Endothelial cell of umbilical vein (primary cell): ENCODE measurements at regions of chr5 and their contacts with region 1.

Region 1: GRCh38 chr5:160082614-160083500 is 36.4 kb downstream of the PWWP2A start:
- DNase-seq: peak; percentile 79
- H3K4me3 ChIP-seq: peak overlapping the region in 1 of 3 experiments; percentile 41
- H3K27ac ChIP-seq: peak overlapping the region; percentile 63
- H3K4me1 ChIP-seq: peaks cover 23% of the 10 kb centered on the region
- H3K27me3 ChIP-seq: no peaks in the 10 kb centered on the region
- CTCF ChIP-seq: no peak
- POLR2A ChIP-seq: no peak

Region 2: DNA sequence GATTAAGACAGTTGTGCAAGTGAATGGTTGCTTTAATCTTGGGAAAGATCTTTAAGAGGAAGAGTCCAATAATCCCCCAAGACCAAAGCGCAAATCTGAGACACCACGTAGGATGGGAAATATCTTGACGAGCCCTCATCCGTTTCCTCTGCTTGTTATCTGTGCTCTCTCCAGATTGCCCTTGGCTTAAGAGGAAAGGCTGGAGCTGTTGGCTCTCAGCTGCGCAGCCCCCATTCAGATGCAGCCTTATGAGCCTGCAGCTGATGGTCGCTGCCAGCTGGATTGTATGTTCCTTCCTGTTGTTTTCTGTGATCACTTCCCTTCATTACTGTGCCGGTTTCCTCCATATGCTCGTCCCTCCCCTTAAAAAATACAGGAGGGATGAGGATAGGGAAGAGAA is 11.3 kb before region 1 on chr5:
- CTCF ChIA-PET with region 1: interaction called, 35 read pairs
- POLR2A ChIA-PET with region 1: interaction called, 5 read pairs
- dilution Hi-C with region 1: no loop called
- intact Hi-C with region 1: loop called (anchors 1 kb)
- DNase-seq: no peak
- H3K4me3 ChIP-seq: no peak overlapping the region
- H3K27ac ChIP-seq: peak overlapping the region; percentile 31
- H3K4me1 ChIP-seq: peaks cover 23% of the 10 kb centered on the region
- H3K27me3 ChIP-seq: no peaks in the 10 kb centered on the region
- CTCF ChIP-seq: no peak
- POLR2A ChIP-seq: no peak

Region 3: GRCh38 chr5:160105686-160106360 is 23.0 kb after region 1 on chr5:
- CTCF ChIA-PET with region 1: interaction called, 12 read pairs
- POLR2A ChIA-PET with region 1: interaction called, 3 read pairs
- dilution Hi-C with region 1: no loop called
- intact Hi-C with region 1: loop called (anchors 2 kb)
- DNase-seq: no peak
- H3K4me3 ChIP-seq: no peak overlapping the region
- H3K27ac ChIP-seq: no peak overlapping the region
- H3K4me1 ChIP-seq: peaks cover 10% of the 10 kb centered on the region
- H3K27me3 ChIP-seq: no peaks in the 10 kb centered on the region
- CTCF ChIP-seq: no peak
- POLR2A ChIP-seq: no peak

Region 4: DNA sequence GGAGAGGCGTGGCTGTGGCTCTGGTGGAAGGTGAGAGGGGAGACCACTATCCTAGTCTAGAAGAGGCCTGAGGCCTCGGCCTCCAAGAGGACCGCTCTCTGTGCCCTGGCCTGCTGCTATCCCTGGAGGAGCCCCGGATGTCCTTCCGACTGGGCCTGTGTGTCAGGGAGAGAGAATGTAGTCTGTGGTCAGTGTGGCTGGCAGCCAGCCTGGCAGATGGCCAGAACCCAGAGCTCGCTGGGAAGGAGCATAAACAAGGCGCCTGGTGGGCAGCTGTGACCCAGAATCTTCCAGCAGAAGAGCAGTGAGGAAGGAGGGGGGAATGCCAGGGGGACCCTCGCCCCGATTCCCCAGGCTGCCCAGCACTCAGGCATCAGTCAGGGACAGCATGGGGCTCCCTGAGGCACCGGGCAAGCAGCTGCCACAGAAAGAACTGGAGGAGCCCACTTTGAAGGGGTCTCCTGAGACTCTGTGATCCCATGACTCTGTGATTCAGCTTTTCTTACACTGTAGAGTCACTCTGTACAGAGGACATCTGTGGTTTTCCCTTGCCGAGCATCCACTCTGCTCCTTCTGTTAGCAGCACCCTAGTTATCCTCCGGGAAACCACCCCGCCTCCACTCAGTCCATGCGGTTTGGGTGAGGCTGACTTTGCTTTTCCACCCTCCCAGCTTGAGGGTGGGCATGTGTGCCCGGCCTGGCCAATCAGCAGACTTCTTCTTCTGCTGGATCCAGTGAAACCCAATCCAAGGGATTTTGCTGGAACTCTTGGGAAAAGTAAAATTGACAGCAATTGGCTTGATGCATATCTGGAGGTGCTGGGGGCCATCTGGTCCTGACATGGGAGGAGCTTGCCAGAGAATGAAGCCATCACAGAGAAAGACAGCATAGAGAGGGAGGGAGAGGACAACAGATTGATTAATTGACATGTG is 82.5 kb after region 1 on chr5:
- CTCF ChIA-PET with region 1: interaction called, 6 read pairs
- POLR2A ChIA-PET with region 1: no interaction called
- dilution Hi-C with region 1: no loop called
- intact Hi-C with region 1: loop called (anchors 1 kb)
- DNase-seq: peak; percentile 86
- H3K4me3 ChIP-seq: no peak overlapping the region
- H3K27ac ChIP-seq: peak overlapping the region; percentile 89
- H3K4me1 ChIP-seq: peaks cover 44% of the 10 kb centered on the region
- H3K27me3 ChIP-seq: no peaks in the 10 kb centered on the region
- CTCF ChIP-seq: no peak
- POLR2A ChIP-seq: peak; percentile 73

Region 5: GRCh38 chr5:160199410-160199911 is 116.6 kb after region 1 on chr5:
- CTCF ChIA-PET with region 1: interaction called, 15 read pairs
- POLR2A ChIA-PET with region 1: no interaction called
- dilution Hi-C with region 1: no loop called
- intact Hi-C with region 1: loop called (anchors 1 kb)
- DNase-seq: peak; percentile 42
- H3K4me3 ChIP-seq: peak overlapping the region in 1 of 3 experiments; percentile 35
- H3K27ac ChIP-seq: no peak overlapping the region
- H3K4me1 ChIP-seq: peaks cover 12% of the 10 kb centered on the region
- H3K27me3 ChIP-seq: no peaks in the 10 kb centered on the region
- CTCF ChIP-seq: peak; percentile 85 to 93
- POLR2A ChIP-seq: no peak

Region 6: DNA sequence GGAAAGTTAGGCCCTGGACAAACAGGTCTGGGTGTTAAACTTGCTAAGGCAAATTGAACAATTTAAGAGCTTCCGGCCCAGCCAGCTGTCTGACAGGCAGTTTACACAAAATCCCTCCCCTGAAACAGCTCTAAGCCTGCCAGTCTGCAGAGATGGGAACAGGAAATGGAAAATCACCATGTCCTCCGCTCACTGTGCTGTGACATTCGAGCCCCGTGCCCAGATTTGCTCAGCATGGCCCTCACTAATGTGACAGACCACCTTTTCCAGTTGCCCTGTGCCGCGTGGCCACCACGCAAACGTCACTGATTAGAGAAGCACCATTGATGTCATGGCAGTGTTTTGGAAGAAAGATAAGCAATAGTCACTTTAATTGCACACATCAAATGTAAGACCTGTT is 188.5 kb after region 1 on chr5:
- CTCF ChIA-PET with region 1: interaction called, 4 read pairs
- POLR2A ChIA-PET with region 1: no interaction called
- dilution Hi-C with region 1: no loop called
- intact Hi-C with region 1: loop called (anchors 5 kb)
- DNase-seq: peak; percentile 51
- H3K4me3 ChIP-seq: peak overlapping the region in 1 of 3 experiments; percentile 1
- H3K27ac ChIP-seq: peak overlapping the region; percentile 19
- H3K4me1 ChIP-seq: peaks cover 49% of the 10 kb centered on the region
- H3K27me3 ChIP-seq: no peaks in the 10 kb centered on the region
- CTCF ChIP-seq: no peak
- POLR2A ChIP-seq: no peak